AG04450 (cell line): ENCODE measurements at regions of chr13 and their contacts with region 1.

Region 1: GRCh38 chr13:59318320-59318930 is 845.3 kb downstream of the DIAPH3 start:
- DNase-seq: peak; percentile 16
- H3K4me3 ChIP-seq: no peak overlapping the region
- H3K27ac ChIP-seq: no peak overlapping the region
- H3K27me3 ChIP-seq: no peaks in the 10 kb centered on the region
- CTCF ChIP-seq: peak; percentile 82

Region 2: DNA sequence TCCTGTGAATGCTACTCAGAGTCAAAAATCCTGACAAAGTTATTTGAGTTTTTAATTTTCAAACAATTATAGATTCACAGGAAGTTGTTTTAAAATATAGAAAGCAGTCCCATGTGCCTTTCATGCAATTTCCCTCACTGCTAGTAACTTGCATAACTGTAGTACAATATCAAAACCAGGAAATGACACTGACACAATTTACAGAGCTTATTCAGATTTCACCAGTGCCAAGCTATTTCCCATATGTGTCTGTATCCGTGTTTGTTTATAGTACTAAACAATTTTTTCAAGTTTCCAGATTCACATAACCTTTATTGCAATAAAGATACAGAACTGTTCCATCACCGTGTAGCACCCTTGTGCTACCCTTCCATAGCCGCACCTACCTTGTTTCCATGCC is 752.2 kb before region 1 on chr13:
- CTCF ChIA-PET with region 1: no interaction called
- POLR2A ChIA-PET with region 1: no interaction called
- DNase-seq: no peak
- H3K4me3 ChIP-seq: no peak overlapping the region
- H3K27ac ChIP-seq: no peak overlapping the region
- H3K27me3 ChIP-seq: no peaks in the 10 kb centered on the region
- CTCF ChIP-seq: no peak

Region 3: GRCh38 chr13:58908019-58908679 is 410.3 kb before region 1 on chr13:
- CTCF ChIA-PET with region 1: interaction called, 11 read pairs
- POLR2A ChIA-PET with region 1: no interaction called
- DNase-seq: no peak
- H3K4me3 ChIP-seq: no peak overlapping the region
- H3K27ac ChIP-seq: no peak overlapping the region
- H3K27me3 ChIP-seq: no peaks in the 10 kb centered on the region
- CTCF ChIP-seq: no peak

Region 4: DNA sequence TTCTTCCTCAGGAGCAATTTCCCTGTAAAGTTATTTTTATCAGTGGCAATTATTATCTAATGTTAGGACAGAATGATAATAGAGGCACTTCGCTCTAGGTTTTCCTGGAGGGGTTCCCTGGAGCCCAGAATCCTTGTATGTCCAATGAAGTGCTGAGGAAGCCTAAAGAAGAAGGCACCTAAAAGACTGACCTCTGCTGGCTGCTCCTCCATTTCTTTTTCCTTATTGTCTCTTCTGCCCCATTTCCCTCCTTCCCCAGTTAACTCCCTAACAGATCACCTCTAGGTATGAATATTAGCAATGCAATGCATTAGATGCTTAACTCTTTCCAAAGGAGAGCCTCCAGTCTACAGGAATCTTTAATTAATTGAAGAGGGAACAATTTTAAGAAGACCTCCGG is 140.1 kb before region 1 on chr13:
- CTCF ChIA-PET with region 1: no interaction called
- POLR2A ChIA-PET with region 1: no interaction called
- DNase-seq: no peak
- H3K4me3 ChIP-seq: no peak overlapping the region
- H3K27ac ChIP-seq: no peak overlapping the region
- H3K27me3 ChIP-seq: no peaks in the 10 kb centered on the region
- CTCF ChIP-seq: peak; percentile 54

Region 5: DNA sequence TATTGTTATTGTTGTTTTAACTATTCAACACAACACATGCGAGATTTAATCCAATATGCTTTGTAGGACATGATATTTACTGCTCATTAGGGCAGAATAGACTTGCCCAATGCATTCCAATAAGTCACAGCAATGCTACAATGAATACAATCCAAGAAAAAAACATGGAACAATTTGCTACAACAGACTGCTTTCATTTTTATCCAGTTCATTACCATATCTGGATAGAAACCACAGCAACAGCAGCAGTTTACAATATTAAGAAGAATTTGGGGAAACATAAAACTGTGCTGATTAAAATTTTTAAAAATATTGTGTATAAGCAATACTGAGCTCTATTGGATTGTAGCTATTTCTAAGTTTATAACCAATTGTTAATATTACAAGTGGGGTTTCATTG is 12.3 kb after region 1 on chr13:
- CTCF ChIA-PET with region 1: interaction called, 36 read pairs
- POLR2A ChIA-PET with region 1: no interaction called
- DNase-seq: no peak
- H3K4me3 ChIP-seq: no peak overlapping the region
- H3K27ac ChIP-seq: no peak overlapping the region
- H3K27me3 ChIP-seq: peaks cover 4% of the 10 kb centered on the region
- CTCF ChIP-seq: no peak